IMR-90 (cell line): ENCODE measurements at regions of chr13 and their contacts with region 1.

Region 1: GRCh38 chr13:113816946-113817859 is 46.7 kb downstream of the GAS6 start:
- DNase-seq: peak; percentile 83
- ATAC-seq: peak; percentile 3
- H3K4me3 ChIP-seq: no peak overlapping the region
- H3K27ac ChIP-seq: peak overlapping the region; percentile 3; the same call in 1 of the 2 replicates
- H3K4me1 ChIP-seq: peaks cover 32% of the 10 kb centered on the region
- H3K27me3 ChIP-seq: no peaks in the 10 kb centered on the region
- CTCF ChIP-seq: peak; percentile 78
- POLR2A ChIP-seq: no peak
- RAD21 ChIP-seq: peak; percentile 80

Region 2: DNA sequence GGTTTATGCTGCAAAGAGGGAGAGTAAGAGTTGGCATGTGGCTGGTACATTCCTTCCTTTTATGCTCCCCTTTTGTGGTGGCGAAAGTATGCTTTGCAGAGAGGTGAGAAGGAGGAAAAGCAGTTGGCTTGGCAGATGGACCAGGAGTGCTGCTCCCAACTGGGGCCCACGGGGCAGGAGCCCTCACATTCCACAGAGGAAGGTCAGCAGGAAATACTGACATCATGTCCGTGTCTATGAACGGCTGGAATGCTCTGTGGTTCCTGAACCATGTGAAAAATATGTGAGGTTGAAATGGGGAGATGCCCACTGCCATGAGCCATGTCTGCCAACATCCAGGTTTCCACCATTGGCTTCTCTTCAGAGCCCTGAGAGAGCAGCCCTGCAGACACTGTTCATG is 80.0 kb after region 1 on chr13:
- CTCF ChIA-PET with region 1: no interaction called
- POLR2A ChIA-PET with region 1: no interaction called
- dilution Hi-C with region 1: no loop called
- in situ Hi-C with region 1: no loop called
- intact Hi-C with region 1: no loop called
- DNase-seq: peak; percentile 98
- ATAC-seq: peak; percentile 91
- H3K4me3 ChIP-seq: no peak overlapping the region
- H3K27ac ChIP-seq: peak overlapping the region; percentile 94
- H3K4me1 ChIP-seq: peaks cover 26% of the 10 kb centered on the region
- H3K27me3 ChIP-seq: no peaks in the 10 kb centered on the region
- CTCF ChIP-seq: no peak
- POLR2A ChIP-seq: peak; percentile 54; the same call in 1 of the 2 replicates
- RAD21 ChIP-seq: peak; percentile 1; the same call in 1 of the 2 replicates

Region 3: GRCh38 chr13:113951246-113951999 is 134.2 kb after region 1 on chr13:
- CTCF ChIA-PET with region 1: no interaction called
- POLR2A ChIA-PET with region 1: no interaction called
- dilution Hi-C with region 1: no loop called
- in situ Hi-C with region 1: no loop called
- intact Hi-C with region 1: loop called (anchors 1 kb)
- DNase-seq: peak; percentile 45
- ATAC-seq: peak; percentile 74
- H3K4me3 ChIP-seq: no peak overlapping the region
- H3K27ac ChIP-seq: no peak overlapping the region
- H3K4me1 ChIP-seq: peaks cover 13% of the 10 kb centered on the region
- H3K27me3 ChIP-seq: no peaks in the 10 kb centered on the region
- CTCF ChIP-seq: peak; percentile 65
- POLR2A ChIP-seq: no peak
- RAD21 ChIP-seq: peak; percentile 75

Region 4: GRCh38 chr13:114025714-114026431 is 208.7 kb after region 1 on chr13:
- CTCF ChIA-PET with region 1: no interaction called
- POLR2A ChIA-PET with region 1: no interaction called
- dilution Hi-C with region 1: no loop called
- in situ Hi-C with region 1: no loop called
- intact Hi-C with region 1: loop called (anchors 10 kb)
- DNase-seq: peak; percentile 78
- ATAC-seq: peak; percentile 82
- H3K4me3 ChIP-seq: no peak overlapping the region
- H3K27ac ChIP-seq: peak overlapping the region; percentile 38; the same call in 1 of the 2 replicates
- H3K4me1 ChIP-seq: peaks cover 27% of the 10 kb centered on the region
- H3K27me3 ChIP-seq: no peaks in the 10 kb centered on the region
- CTCF ChIP-seq: peak; percentile 32; the same call in 1 of the 2 replicates
- POLR2A ChIP-seq: no peak
- RAD21 ChIP-seq: peak; percentile 43; the same call in 1 of the 2 replicates